ENCODE measurements at regions of chr12 and their contacts with region 1.

Region 1: GRCh38 chr12:50222275-50222795 is 55.2 kb upstream of the CERS5 start:
- DNase-seq: peak; percentile 54
- ATAC-seq: peak; percentile 56
- H3K4me3 Mint-ChIP-seq: no peak overlapping the region
- H3K27ac Mint-ChIP-seq: no peak overlapping the region
- H3K4me1 Mint-ChIP-seq: peaks cover 36% of the 10 kb centered on the region
- H3K27me3 Mint-ChIP-seq: no peaks in the 10 kb centered on the region

Region 2: DNA sequence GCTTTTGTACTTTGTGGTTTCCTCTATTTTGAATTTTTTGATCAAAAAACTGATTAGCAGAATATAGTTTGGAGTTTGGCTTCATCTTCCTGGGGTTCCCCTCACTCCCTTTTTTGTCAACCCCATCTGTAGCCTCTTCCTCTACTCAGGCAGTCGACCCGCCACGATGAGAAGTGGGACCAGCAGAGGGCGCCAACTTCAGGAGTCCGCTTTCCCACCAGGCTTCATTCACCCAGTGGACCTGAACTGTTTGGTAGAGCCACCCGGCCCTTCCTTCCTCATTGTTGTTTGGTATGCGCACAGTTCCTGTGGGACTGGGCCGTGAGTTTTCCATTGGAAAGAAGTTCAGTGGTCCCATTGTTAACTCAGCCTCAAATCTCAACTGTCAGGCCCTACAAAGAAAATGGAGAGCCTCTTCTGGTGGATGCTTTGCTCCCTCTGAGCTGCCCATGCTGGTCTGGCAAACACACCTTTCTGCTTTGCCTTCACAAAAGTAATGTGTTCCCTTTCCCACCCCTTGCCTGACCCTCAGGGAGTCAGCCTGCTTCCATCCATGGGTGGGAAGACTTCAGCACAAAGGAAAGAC is 459.2 kb before region 1 on chr12:
- CTCF ChIA-PET with region 1: no interaction called
- DNase-seq: peak; percentile 88
- ATAC-seq: peak; percentile 74
- H3K4me3 Mint-ChIP-seq: peak overlapping the region; percentile 17
- H3K27ac Mint-ChIP-seq: peak overlapping the region; percentile 85
- H3K4me1 Mint-ChIP-seq: peaks cover 52% of the 10 kb centered on the region
- H3K27me3 Mint-ChIP-seq: no peaks in the 10 kb centered on the region

Region 3: DNA sequence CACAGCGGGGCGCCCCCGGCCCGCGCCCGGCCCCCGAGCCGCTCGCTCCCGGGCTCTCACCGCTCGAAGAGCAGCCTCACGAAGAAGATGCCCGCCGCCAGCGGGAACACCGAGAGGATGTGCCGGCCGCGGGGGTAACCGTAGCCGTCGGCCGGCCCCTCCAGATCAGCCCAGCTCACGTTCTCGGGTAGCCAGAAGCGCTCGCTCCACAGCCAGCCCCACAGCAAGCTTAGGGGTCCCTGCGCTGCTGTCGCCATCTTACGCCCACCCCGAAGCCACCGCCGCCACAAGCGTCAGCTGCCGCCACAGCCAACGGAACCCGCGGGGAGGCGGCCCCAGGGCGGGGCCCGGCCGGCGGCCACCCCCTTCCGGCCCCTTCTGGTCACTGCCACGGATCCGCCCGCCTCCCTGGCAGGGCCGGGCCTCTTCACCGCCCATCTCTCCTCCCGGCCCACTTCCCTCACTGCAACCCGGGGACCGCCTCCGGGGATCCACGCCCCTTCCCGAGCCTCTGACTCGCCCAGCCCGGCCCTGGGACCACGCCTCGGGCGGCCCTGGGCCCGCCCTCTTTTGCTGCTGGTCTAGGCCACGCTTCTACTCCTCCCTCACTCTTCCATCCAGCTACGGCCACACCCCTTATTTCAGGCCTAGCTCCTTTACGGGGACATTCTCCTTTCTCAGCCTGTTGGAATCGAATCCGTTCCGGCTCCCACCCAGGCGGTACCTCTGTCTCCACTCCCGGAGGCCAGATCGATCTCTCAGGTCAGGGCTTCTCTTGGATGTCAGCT is 55.1 kb before region 1 on chr12 and contains the start of gene CERS5:
- CTCF ChIA-PET with region 1: interaction called, 10 read pairs
- DNase-seq: peak; percentile 99
- ATAC-seq: peak; percentile 99
- H3K4me3 Mint-ChIP-seq: peak within 1 kb of the TSS; percentile 87
- H3K27ac Mint-ChIP-seq: peak within 1 kb of the TSS; percentile 97
- H3K4me1 Mint-ChIP-seq: peaks cover 27% of the 10 kb centered on the region
- H3K27me3 Mint-ChIP-seq: no peaks in the 10 kb centered on the region
- total RNA-seq, gene CERS5: 55.0 to 56.3 TPM

Region 4: GRCh38 chr12:50211392-50212070 is 10.8 kb before region 1 on chr12:
- CTCF ChIA-PET with region 1: interaction called, 36 read pairs
- DNase-seq: no peak
- ATAC-seq: no peak
- H3K4me3 Mint-ChIP-seq: no peak overlapping the region
- H3K27ac Mint-ChIP-seq: peak overlapping the region; percentile 85
- H3K4me1 Mint-ChIP-seq: peaks cover 47% of the 10 kb centered on the region
- H3K27me3 Mint-ChIP-seq: no peaks in the 10 kb centered on the region

Region 5: GRCh38 chr12:50246873-50247612 is 24.7 kb after region 1 on chr12:
- CTCF ChIA-PET with region 1: interaction called, 14 read pairs
- DNase-seq: peak; percentile 60
- ATAC-seq: peak; percentile 87
- H3K4me3 Mint-ChIP-seq: peak overlapping the region; percentile 45
- H3K27ac Mint-ChIP-seq: peak overlapping the region; percentile 86
- H3K4me1 Mint-ChIP-seq: peaks cover 59% of the 10 kb centered on the region
- H3K27me3 Mint-ChIP-seq: no peaks in the 10 kb centered on the region

Region 6: DNA sequence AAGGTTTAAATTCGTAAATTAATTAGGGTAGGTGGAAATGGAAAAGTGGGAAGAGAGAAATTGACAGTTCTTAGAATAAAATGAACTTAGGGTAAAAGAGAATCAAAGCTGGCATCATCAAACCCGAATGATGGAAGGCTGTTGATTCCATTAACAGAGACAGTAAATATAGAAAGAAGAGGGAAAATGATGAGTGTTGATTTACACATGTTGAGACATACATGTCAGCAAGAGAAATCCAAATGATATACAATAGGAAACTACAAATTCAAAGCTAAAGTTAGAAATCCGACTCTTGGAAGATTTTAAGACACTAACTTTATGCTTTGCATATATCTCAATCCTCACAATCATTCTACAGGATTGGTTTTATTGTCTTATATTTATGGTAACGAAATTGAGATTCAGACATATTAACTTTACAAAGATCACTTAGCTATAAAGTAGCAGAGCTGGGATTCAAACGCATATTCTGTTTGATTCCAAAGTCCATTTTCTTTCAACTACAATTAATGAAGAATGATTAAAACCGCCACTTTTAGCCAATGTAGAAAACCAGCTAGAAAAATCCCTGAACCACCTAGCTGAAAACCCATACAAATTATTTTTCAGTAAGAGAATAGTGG is 30.8 kb after region 1 on chr12:
- CTCF ChIA-PET with region 1: interaction called, 11 read pairs
- DNase-seq: no peak
- ATAC-seq: no peak
- H3K4me3 Mint-ChIP-seq: no peak overlapping the region
- H3K27ac Mint-ChIP-seq: peak overlapping the region; percentile 17
- H3K4me1 Mint-ChIP-seq: peaks cover 64% of the 10 kb centered on the region
- H3K27me3 Mint-ChIP-seq: no peaks in the 10 kb centered on the region

Region 7: GRCh38 chr12:50283229-50283923 is 61.0 kb after region 1 on chr12 and contains the start of gene LIMA1:
- CTCF ChIA-PET with region 1: interaction called, 28 read pairs
- DNase-seq: peak; percentile 94
- ATAC-seq: peak; percentile 97
- H3K4me3 Mint-ChIP-seq: peak within 1 kb of the TSS; percentile 88
- H3K27ac Mint-ChIP-seq: peak within 1 kb of the TSS; percentile 83
- H3K4me1 Mint-ChIP-seq: peaks cover 23% of the 10 kb centered on the region
- H3K27me3 Mint-ChIP-seq: peaks cover 13% of the 10 kb centered on the region
- total RNA-seq, gene LIMA1: 36.4 to 64.2 TPM

Region 8: DNA sequence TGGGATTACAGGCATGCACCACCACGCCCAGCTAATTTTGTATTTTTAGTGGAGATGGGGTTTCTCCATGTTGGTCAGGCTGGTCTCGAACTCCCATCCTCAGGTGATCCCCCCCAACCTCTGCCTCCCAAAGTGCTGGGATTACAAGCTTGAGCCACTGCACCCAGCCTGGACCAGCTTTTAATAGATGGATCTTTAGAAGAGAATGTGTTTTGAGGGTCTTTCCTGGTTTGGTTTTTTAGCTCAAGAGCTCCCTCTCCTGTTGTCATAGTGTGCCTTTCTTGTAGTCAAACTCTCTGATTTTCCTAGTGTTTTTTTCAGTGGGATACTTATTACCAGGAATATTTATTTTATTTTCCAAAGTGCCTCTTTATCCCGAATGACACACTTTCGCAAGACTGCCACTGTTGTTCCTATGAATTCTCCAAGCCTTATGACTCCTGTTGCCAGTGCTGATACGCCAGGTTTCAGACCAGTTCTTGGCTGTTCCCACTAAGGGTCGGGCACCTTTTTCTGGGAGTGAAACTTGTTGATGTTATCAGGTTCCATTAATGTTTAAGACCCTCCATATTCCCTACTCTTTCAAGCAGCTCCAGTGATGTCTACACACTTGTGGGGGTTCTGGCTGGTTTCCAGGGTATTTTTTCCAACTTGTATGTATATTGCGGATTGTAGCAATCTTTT is 92.4 kb after region 1 on chr12:
- CTCF ChIA-PET with region 1: interaction called, 12 read pairs
- DNase-seq: no peak
- ATAC-seq: no peak
- H3K4me3 Mint-ChIP-seq: no peak overlapping the region
- H3K27ac Mint-ChIP-seq: no peak overlapping the region
- H3K4me1 Mint-ChIP-seq: peaks cover 5% of the 10 kb centered on the region
- H3K27me3 Mint-ChIP-seq: no peaks in the 10 kb centered on the region